ENCODE measurements at regions of chr20 and their contacts with region 1.

Region 1: DNA sequence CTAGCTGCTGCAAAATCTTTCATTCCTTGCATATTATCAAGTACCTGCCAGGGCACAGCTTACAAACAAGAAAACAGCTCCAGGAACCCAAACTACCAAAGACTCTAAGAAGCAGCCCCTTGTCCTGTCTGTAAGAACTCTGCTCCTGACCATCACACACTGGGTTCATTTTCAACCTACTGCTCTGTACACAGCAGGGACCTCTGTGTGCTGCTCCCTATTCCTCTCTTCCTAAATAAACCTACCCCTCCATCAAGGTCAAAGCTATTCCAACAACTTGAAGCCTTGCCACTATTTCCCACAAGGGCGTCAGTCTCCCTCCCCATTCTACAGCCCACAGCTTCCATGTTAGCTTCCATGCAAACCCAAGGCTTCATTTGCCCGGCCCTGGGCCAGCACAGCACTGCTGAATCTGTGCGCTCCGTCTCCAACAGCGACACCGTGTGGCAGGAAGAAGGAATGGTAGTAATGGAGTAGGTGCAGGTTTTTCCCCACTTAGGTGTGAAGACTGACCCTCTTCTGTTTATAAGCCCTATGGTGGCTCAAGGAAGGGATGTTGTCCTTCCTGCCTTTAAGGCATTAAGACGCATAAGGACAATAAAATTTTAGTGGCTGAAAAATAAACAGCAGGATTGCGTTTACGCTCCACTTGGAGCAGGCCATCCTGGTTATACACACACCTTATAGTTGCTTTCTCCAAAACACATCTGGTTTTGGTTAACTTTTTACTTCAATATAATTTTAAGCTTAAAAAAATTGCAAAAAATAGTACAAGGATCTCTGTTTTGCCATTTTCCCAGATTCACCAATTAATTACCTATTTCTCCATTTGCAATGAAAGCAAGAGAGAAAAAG is 115.2 kb upstream of the NXT1 start:
- DNase-seq: peak; percentile 48
- H3K4me3 Mint-ChIP-seq: no peak overlapping the region
- H3K27ac Mint-ChIP-seq: no peak overlapping the region
- H3K4me1 Mint-ChIP-seq: no peaks in the 10 kb centered on the region
- H3K27me3 Mint-ChIP-seq: peaks cover 8% of the 10 kb centered on the region

Region 2: DNA sequence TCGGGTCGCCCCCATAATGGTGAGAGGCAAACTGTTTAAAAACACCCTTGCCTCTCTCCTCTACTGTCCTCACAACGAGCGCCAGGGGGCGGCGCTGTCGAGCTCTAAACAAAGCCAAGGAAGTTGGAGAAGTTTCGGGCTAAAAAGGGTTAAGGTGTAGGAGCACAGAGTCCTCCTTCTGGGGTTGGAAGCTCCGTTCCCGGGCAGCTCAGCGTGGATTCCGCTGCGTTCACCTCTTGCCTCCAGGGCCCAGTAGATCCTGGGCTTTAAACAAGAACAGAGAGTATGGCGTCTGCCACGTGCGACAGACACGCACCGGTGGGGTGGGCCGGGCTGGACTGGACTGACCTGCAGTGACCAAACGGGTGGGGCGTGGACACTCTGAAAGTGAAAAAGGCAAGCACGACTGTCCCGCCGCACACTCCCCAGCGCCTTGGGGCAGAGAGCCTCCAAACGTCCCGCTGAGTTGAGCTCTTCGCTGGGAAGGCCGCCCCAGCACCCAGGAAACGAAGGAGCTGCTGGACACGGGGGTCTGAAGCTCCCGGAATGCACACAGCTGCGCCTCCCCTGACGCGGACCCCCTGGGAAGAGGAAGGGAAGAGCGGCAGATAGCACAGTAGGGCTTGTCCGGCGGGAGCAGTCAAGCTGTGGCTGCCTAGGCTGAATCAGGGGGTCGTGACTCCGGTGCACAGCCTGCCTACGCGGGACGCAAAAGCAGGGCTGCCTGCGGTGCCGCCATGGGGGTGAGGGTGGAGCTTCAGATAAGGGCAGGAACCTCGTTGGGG is 184.4 kb before region 1 on chr20:
- CTCF ChIA-PET with region 1: no interaction called
- intact Hi-C with region 1: loop called (anchors 2 kb)
- DNase-seq: peak; percentile 51
- H3K4me3 Mint-ChIP-seq: no peak overlapping the region
- H3K27ac Mint-ChIP-seq: no peak overlapping the region
- H3K4me1 Mint-ChIP-seq: peaks cover 4% of the 10 kb centered on the region
- H3K27me3 Mint-ChIP-seq: peaks cover 42% of the 10 kb centered on the region

Measured in activated naive CD4-positive, alpha-beta T cell treated with anti-CD3 and anti-CD28 coated beads for 36 hours (primary cell).